Activated CD4-positive, alpha-beta T cell treated with anti-CD3 and anti-CD28 coated beads, Interleukin-2, amount 10 ng/mL, durations not matched to agents 24 days and 14 days (primary cell): ENCODE measurements at regions of chr18 and their contacts with region 1.

Region 1: GRCh38 chr18:5237723-5238370 is 40.8 kb upstream of the AKAIN1 start:
- DNase-seq: peak; percentile 97
- H3K4me3 Mint-ChIP-seq: peak overlapping the region; percentile 92
- H3K27ac Mint-ChIP-seq: peak overlapping the region; percentile 99
- H3K4me1 Mint-ChIP-seq: peaks cover 30% of the 10 kb centered on the region
- H3K27me3 Mint-ChIP-seq: peaks cover 3% of the 10 kb centered on the region

Region 2: DNA sequence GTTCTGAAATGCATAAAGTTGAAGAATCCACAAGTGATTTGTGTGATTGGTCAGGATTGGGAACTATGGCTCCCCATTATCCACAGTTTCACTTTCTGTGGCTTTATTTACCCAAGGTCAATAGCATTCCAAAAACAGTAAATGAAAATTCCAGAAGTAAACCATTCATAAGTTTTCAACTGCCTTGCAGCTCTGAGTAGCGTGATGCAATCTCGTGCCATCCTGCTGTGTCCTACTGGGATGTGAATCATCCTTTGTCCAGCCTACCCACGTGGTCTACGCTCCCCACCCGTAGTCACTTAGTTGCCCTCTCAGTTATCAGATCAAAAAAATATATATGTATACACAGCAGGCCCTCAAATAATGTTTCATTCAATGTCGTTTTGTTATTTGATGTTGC is 693.7 kb before region 1 on chr18:
- intact Hi-C with region 1: no loop called
- DNase-seq: no peak
- H3K4me3 Mint-ChIP-seq: no peak overlapping the region
- H3K27ac Mint-ChIP-seq: no peak overlapping the region
- H3K4me1 Mint-ChIP-seq: no peaks in the 10 kb centered on the region
- H3K27me3 Mint-ChIP-seq: no peaks in the 10 kb centered on the region

Region 3: DNA sequence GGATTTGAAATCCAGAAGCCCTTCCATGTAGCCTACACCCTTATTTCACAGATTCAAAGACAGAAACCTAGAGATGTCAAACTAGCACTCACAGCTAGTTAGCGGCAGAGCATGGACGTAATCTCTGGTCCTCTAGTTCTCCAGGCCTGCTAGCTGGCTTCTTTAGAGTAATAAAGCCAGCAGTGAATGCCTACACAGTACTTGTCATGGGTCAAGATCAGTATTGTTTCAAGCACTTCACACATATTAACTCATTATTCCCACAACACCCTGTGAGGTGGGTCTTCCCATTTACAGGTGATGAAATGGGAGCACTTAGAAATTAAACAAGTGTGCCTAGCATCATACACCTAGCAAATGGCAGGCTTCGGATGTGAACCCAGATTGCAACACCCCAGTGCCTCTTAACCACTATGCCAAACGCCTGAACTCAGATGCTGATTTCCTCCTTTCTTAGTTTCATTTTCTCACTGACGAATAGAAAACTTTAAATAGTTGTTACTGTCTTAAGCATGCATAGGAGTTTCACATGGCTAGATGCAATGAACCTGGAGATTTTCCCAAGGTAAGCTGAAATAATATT is 72.1 kb after region 1 on chr18:
- intact Hi-C with region 1: loop called (anchors 5 kb)
- DNase-seq: peak; percentile 81
- H3K4me3 Mint-ChIP-seq: peak overlapping the region; percentile 69
- H3K27ac Mint-ChIP-seq: peak overlapping the region; percentile 6
- H3K4me1 Mint-ChIP-seq: peaks cover 12% of the 10 kb centered on the region
- H3K27me3 Mint-ChIP-seq: peaks cover 1% of the 10 kb centered on the region

Region 4: GRCh38 chr18:5389356-5389755 is 151.5 kb after region 1 on chr18:
- intact Hi-C with region 1: no loop called
- DNase-seq: no peak
- H3K4me3 Mint-ChIP-seq: no peak overlapping the region
- H3K27ac Mint-ChIP-seq: no peak overlapping the region
- H3K4me1 Mint-ChIP-seq: no peaks in the 10 kb centered on the region
- H3K27me3 Mint-ChIP-seq: no peaks in the 10 kb centered on the region

Region 5: DNA sequence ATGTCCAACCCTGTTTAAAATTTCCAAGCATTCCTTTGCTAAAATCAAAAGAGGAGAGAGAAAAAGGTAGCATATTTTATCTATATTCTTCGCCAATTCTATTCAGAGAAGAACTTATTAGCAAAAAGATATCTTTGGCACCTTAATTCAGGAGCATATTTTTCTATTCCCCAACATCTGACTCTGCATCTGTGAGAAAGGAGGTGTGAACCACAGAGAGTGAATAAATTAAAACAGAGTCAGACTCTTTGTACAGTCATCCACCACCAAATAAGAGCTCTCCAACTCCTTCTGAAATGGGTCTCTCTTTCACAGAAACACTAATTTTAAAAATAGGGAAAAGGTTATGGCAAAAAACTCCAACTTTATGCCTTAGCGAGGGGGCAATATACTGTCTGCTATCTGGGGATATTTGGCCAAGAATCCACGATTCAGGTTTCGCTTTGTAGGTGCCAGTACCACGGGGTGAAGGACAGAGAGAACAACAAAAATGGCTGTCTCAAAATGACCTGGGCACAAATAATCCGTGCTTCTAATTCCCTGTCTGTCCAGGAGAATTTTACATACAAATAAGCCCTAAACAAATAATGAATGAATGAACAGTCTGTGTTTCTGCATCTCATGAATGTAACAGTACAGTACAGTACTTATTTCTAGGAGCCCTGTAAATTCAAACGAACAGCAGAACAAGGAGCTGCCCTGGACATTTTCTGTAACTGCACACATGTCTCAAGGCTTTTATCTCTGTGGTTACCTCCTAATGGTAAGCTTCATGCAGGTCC is 262.5 kb after region 1 on chr18:
- intact Hi-C with region 1: no loop called
- DNase-seq: no peak
- H3K4me3 Mint-ChIP-seq: no peak overlapping the region
- H3K27ac Mint-ChIP-seq: no peak overlapping the region
- H3K4me1 Mint-ChIP-seq: no peaks in the 10 kb centered on the region
- H3K27me3 Mint-ChIP-seq: peaks cover 10% of the 10 kb centered on the region